ENCODE measurements at regions of chr6 and their contacts with region 1.

Region 1: DNA sequence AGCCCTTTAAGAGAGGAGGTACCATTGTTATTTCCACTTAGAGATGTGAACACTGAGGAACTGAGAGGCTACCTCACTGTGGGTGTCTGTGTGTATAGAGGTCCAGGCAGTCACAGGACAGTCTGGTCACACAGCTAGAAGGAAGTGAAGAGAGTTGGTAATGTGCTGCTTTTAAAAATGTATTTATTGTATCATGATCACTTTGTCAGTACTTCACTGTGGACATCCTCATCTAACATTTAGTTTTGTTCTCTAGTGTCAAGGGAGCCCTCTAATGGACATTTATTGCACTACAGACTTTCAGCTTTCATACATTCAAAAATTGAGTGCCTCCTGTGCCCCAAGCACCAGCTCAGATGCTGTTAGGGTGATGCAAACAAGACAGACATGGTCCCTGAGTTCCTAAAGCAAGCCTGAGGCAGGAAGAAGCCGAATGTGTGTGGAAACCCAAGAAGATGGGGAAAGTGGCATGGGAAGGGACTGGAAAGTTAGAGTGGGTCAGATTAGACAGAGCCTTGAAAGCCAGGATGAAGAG is 123.0 kb downstream of the SLC16A10 start:
- DNase-seq: no peak
- ATAC-seq: peak; percentile 68
- H3K4me3 Mint-ChIP-seq: no peak overlapping the region
- H3K27ac Mint-ChIP-seq: no peak overlapping the region
- H3K4me1 Mint-ChIP-seq: no peaks in the 10 kb centered on the region
- H3K27me3 Mint-ChIP-seq: no peaks in the 10 kb centered on the region
- CTCF ChIP-seq: no peak

Region 2: GRCh38 chr6:111011360-111012142 is 198.7 kb before region 1 on chr6:
- CTCF ChIA-PET with region 1: interaction called, 16 read pairs
- POLR2A ChIA-PET with region 1: no interaction called
- intact Hi-C with region 1: loop called (anchors 1 kb)
- DNase-seq: no peak
- ATAC-seq: peak; percentile 50
- H3K4me3 Mint-ChIP-seq: no peak overlapping the region
- H3K27ac Mint-ChIP-seq: no peak overlapping the region
- H3K4me1 Mint-ChIP-seq: peaks cover 4% of the 10 kb centered on the region
- H3K27me3 Mint-ChIP-seq: no peaks in the 10 kb centered on the region
- CTCF ChIP-seq: no peak